IMR-90 (cell line): ENCODE measurements at regions of chr6 and their contacts with region 1.

Region 1: GRCh38 chr6:117399924-117400323 is 25.8 kb downstream of the ROS1 start:
- DNase-seq: peak; percentile 4
- ATAC-seq: no peak
- H3K4me3 ChIP-seq: no peak overlapping the region
- H3K27ac ChIP-seq: no peak overlapping the region
- H3K4me1 ChIP-seq: no peaks in the 10 kb centered on the region
- H3K27me3 ChIP-seq: no peaks in the 10 kb centered on the region; the same call in 1 of the 2 replicates
- CTCF ChIP-seq: peak; percentile 43
- POLR2A ChIP-seq: no peak
- RAD21 ChIP-seq: peak; percentile 40

Region 2: DNA sequence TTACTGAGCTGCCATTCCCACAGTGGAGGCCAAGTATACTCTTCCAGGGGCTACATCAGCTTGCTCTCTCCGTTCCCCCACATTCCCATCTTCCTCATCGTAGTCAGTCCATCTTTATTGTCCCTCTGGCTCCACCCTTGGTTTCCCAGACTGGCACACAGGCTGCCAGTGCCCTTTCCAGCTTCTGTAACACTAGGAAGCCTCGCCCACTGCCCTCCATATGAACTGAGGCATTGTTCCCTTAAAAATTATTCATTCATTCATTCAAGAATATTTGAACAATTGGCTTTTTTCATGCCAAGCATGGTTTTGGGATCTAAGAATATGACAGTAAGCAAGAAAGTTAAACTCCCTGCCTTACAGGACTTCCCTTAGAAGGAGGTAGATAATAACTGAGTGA is 11.6 kb after region 1 on chr6:
- CTCF ChIA-PET with region 1: interaction called, 12 read pairs
- POLR2A ChIA-PET with region 1: no interaction called
- dilution Hi-C with region 1: no loop called
- in situ Hi-C with region 1: no loop called
- intact Hi-C with region 1: no loop called
- DNase-seq: no peak
- ATAC-seq: no peak
- H3K4me3 ChIP-seq: no peak overlapping the region
- H3K27ac ChIP-seq: no peak overlapping the region
- H3K4me1 ChIP-seq: no peaks in the 10 kb centered on the region
- H3K27me3 ChIP-seq: peaks cover 5% of the 10 kb centered on the region
- CTCF ChIP-seq: no peak
- POLR2A ChIP-seq: no peak
- RAD21 ChIP-seq: no peak

Region 3: DNA sequence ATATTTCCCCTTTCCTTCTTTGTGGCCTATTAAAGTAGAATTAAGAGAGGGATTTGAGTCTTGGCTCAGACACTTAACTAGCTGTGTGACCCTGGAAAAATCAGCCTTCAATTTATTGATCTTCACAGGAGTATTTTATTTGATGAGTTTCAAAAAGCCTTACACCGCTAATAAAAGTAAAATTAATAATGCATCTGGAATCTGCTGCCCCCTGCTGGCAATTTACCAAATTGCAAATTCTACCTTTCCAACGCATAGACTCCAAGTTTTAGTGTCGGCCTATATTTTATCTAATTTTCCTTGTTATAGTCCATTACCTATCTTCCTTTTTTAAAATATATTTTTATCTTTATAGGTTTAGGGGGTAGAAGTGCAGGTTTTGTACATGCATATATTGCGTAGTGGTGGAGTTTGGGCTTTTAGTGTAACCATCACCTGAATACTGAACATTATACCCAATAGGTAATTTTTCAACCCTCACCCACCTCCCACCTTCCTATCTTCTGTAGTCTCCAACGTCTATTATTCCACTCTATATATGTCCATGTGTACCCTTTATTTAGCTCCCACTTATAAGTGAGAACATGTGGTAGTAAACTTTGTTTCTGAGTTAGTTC is 156.1 kb after region 1 on chr6:
- CTCF ChIA-PET with region 1: no interaction called
- POLR2A ChIA-PET with region 1: no interaction called
- dilution Hi-C with region 1: no loop called
- in situ Hi-C with region 1: no loop called
- intact Hi-C with region 1: loop called (anchors 1 kb)
- DNase-seq: peak; percentile 31
- ATAC-seq: peak; percentile 59
- H3K4me3 ChIP-seq: no peak overlapping the region
- H3K27ac ChIP-seq: no peak overlapping the region
- H3K4me1 ChIP-seq: peaks cover 2% of the 10 kb centered on the region; the same call in 1 of the 2 replicates
- H3K27me3 ChIP-seq: no peaks in the 10 kb centered on the region
- CTCF ChIP-seq: peak; percentile 82
- POLR2A ChIP-seq: no peak
- RAD21 ChIP-seq: peak; percentile 75